GM13976 (cell line): ENCODE measurements at regions of chr5 and their contacts with region 1.

Region 1: DNA sequence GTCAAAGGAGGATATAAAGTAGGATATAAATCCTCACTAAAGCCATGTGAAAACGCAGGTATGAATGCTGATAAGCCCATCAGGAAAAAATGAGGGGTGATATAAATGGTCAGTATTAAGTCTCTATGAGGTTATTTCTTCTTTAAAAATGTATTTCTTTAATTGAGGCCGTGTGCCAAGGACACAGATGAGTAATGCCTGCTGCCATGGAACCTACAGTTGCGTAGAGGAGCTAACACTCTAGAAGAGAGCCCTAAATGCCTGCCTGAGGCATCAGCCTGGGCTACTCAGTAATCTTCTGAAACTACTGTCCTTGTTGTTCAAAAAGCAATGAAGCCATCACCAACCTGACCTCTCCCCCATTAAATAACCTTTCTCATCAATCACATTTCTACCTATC is 84.9 kb downstream of the KLHL3 start:
- DNase-seq: no peak
- CTCF ChIP-seq: no peak

Region 2: GRCh38 chr5:137743031-137743640 is 92.1 kb after region 1 on chr5:
- in situ Hi-C with region 1: loop called (anchors 10 kb)
- DNase-seq: peak; percentile 42
- CTCF ChIP-seq: peak; percentile 56